ENCODE measurements at regions of chr6 and their contacts with region 1.

Region 1: GRCh38 chr6:150599199-150600009 is at the start of gene PLEKHG1:
- DNase-seq: no peak
- H3K4me3 ChIP-seq: peak within 1 kb of the TSS; percentile 64 to 91 (median 82)
- H3K27ac ChIP-seq: peak within 1 kb of the TSS; percentile 74 to 84 (median 78)
- H3K4me1 ChIP-seq: peaks cover 0 to 23% (median 20%) of the 10 kb centered on the region in 4 donors
- H3K27me3 ChIP-seq: peaks cover 0 to 4% (median 2%) of the 10 kb centered on the region in 4 donors
- CTCF ChIP-seq: no peak
- EP300 ChIP-seq: no peak
- POLR2A ChIP-seq: no peak
- total RNA-seq, gene PLEKHG1: 11.5 to 22.0 (median 13.2) TPM

Region 2: GRCh38 chr6:150417899-150418826 is 181.2 kb before region 1 on chr6:
- intact Hi-C with region 1: loop called (anchors 5 kb)
- DNase-seq: no peak
- H3K4me3 ChIP-seq: peak overlapping the region; percentile 38 to 60 (median 52)
- H3K27ac ChIP-seq: peak overlapping the region; percentile 5 to 71 (median 54)
- H3K4me1 ChIP-seq: peaks cover 11 to 18% (median 14%) of the 10 kb centered on the region in 4 donors
- H3K27me3 ChIP-seq: no peaks in the 10 kb centered on the region
- CTCF ChIP-seq: peak; percentile 67 to 81 (median 81)
- EP300 ChIP-seq: no peak
- POLR2A ChIP-seq: no peak

Region 3: GRCh38 chr6:150537893-150538292 is 61.5 kb before region 1 on chr6:
- intact Hi-C with region 1: no loop called
- DNase-seq: peak; percentile 89
- H3K4me3 ChIP-seq: no peak overlapping the region
- H3K27ac ChIP-seq: peak overlapping the region in 2 of 4 donors; percentile 29 to 52
- H3K4me1 ChIP-seq: peaks cover 0 to 13% (median 6%) of the 10 kb centered on the region in 4 donors
- H3K27me3 ChIP-seq: no peaks in the 10 kb centered on the region
- CTCF ChIP-seq: no peak
- EP300 ChIP-seq: no peak
- POLR2A ChIP-seq: no peak